ENCODE measurements at regions of chr4 and their contacts with region 1.

Region 1: DNA sequence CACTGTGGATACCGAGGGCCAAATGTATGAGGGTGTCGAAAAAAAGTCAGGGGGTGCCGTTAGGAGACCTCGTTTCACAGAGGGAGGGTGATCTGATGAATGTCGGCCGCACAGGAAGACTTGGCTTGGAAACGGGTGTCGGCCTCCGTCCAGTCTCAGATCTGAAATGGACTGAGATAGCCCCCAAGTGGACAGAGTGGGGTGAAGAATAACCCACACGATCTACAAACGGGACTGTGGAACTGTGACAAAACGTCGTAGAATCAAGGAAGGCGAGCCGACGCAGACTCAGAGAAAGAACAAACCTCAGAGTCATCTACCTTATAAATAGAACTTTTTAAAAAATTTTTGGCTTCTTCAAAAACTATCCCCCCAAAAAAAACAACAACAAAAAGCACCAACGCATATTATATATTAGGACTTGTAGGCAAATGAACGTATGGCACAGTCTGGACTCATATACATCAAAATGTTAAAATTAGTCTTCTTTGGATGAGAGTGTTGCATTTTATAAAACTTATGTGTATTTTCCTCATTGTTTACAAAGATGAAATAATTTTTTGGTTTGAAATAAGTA is 63.8 kb upstream of the IRF2 start:
- DNase-seq: peak; percentile 82 to 90
- ATAC-seq: peak; percentile 94 to 95
- H3K4me3 ChIP-seq: peak overlapping the region; percentile 67 to 89 (median 81)
- H3K27ac ChIP-seq: peak overlapping the region; percentile 90 to 97 (median 92)
- H3K4me1 ChIP-seq: peaks cover 0 to 13% of the 10 kb centered on the region in 2 donors
- H3K27me3 ChIP-seq: no peaks in the 10 kb centered on the region
- CTCF ChIP-seq: peak; percentile 66 to 78 (median 75)
- POLR2A ChIP-seq: no peak

Region 2: GRCh38 chr4:184263910-184264732 is 274.0 kb before region 1 on chr4:
- in situ Hi-C with region 1: loop called in 3 of 4 experiments (anchors 5 to 10 kb)
- intact Hi-C with region 1: loop called (anchors 1 kb)
- DNase-seq: peak; percentile 79 to 86
- ATAC-seq: peak; percentile 85 to 92
- H3K4me3 ChIP-seq: no peak overlapping the region
- H3K27ac ChIP-seq: no peak overlapping the region
- H3K4me1 ChIP-seq: no peaks in the 10 kb centered on the region
- H3K27me3 ChIP-seq: no peaks in the 10 kb centered on the region
- CTCF ChIP-seq: peak; percentile 81 to 94 (median 90)
- POLR2A ChIP-seq: no peak

Region 3: GRCh38 chr4:184287697-184288255 is 250.3 kb before region 1 on chr4:
- in situ Hi-C with region 1: loop called in 2 of 4 experiments (anchors 5 to 10 kb)
- intact Hi-C with region 1: loop called (anchors 1 kb)
- DNase-seq: no peak
- ATAC-seq: peak; percentile 91 to 93
- H3K4me3 ChIP-seq: no peak overlapping the region
- H3K27ac ChIP-seq: peak overlapping the region in 2 of 4 donors; percentile 25
- H3K4me1 ChIP-seq: peaks cover 2 to 8% of the 10 kb centered on the region in 2 donors
- H3K27me3 ChIP-seq: no peaks in the 10 kb centered on the region
- CTCF ChIP-seq: peak; percentile 36 to 46 (median 44)
- POLR2A ChIP-seq: no peak

Region 4: DNA sequence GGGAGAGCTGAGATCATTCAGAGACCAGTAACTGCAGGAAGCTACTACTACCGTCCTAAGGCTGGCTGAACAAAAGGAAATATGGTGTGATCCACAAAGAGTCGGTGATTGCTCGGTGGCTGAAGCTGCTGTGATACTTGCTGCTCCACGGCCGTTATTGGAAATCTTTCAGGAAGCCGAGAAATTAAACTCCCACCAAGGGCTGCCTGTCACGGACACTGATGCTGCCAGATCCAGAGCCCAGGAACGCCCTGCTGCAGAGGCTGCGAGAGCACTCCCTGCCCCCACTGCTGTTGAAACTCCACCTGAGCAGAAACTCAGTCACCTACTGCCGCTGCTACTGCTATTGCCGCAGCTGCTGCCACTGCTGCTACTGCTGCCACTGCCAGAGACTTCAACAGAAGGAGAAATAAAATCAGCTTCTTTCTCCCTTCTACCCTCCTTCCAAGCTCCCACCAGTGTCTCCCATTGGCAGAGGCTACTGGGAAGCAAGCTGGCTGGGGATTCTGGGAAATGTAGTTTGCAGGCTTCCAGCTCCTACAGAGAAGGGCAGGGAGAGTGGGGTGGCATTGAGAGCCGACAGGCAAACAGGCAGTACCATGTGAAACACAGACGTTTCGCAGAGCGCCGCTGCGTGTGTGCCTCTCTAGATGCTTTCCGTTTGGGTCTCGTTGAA is 194.5 kb before region 1 on chr4:
- in situ Hi-C with region 1: no loop called
- intact Hi-C with region 1: loop called (anchors 1 kb)
- DNase-seq: peak; percentile 77 to 84
- ATAC-seq: peak; percentile 64 to 69
- H3K4me3 ChIP-seq: peak overlapping the region; percentile 56 to 82 (median 67)
- H3K27ac ChIP-seq: peak overlapping the region; percentile 91 to 97 (median 92)
- H3K4me1 ChIP-seq: peaks cover 51 to 54% of the 10 kb centered on the region in 2 donors
- H3K27me3 ChIP-seq: no peaks in the 10 kb centered on the region
- CTCF ChIP-seq: no peak
- POLR2A ChIP-seq: peak; percentile 50 to 69

Region 5: DNA sequence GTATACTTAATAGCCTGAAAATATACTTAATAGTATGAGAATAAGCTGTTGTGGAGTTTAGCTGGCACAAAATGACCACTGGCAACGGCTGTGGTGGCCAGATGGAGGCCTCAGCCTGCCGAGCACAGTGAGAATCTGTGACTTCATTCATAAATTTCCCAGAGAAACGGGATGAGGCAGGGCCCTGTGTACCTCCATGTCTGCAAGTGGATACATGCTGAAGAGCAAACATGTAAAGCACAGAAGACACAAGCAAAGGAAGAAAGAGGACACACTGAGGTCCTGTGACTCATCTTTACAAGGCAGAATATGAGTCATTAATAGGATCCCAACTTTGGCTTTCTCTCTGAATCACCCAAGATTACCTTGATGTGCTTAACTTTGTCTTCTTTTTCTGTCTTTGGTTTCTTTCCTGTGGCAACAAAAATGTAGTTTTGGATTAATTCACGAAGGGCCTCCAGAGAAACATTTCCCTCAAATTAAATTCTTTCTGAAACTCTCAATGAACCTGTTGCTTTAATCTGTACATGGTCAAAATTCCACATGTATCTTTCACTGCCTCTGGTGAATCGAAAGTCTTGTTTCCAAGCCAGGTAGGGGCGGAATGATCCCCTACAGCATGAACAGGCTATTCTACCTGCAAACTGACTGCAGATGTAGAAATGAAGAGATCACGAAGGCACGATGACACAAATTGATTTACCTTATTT is 120.2 kb before region 1 on chr4:
- in situ Hi-C with region 1: no loop called
- intact Hi-C with region 1: loop called (anchors 2 kb)
- DNase-seq: no peak
- ATAC-seq: peak; percentile 97 to 98
- H3K4me3 ChIP-seq: peak overlapping the region in 1 of 4 donors; percentile 26
- H3K27ac ChIP-seq: peak overlapping the region; percentile 41 to 81 (median 68)
- H3K4me1 ChIP-seq: peaks cover 23 to 36% of the 10 kb centered on the region in 2 donors
- H3K27me3 ChIP-seq: no peaks in the 10 kb centered on the region
- CTCF ChIP-seq: no peak
- POLR2A ChIP-seq: no peak

Region 6: DNA sequence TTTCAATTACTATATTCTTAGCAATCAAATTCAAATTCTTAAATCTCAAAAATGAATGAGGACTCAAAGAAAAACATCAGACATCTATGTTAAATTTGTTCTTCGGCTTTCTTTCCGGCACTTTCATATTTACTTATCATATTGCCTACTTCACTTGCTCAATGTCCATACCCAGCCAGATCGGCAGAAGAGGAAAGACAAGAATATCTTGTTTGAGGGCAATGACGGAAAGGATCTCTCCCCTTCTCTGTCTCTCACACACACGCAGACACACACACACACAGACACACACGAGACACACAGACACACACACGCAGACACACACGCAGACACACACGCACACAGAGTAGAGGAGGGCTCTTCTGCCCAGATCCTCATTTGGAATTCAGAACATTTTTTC is 50.6 kb before region 1 on chr4:
- in situ Hi-C with region 1: loop called in 2 of 4 experiments (anchors 5 to 10 kb)
- intact Hi-C with region 1: no loop called
- DNase-seq: no peak
- ATAC-seq: no peak
- H3K4me3 ChIP-seq: no peak overlapping the region
- H3K27ac ChIP-seq: no peak overlapping the region
- H3K4me1 ChIP-seq: no peaks in the 10 kb centered on the region
- H3K27me3 ChIP-seq: no peaks in the 10 kb centered on the region
- CTCF ChIP-seq: no peak
- POLR2A ChIP-seq: no peak

Region 7: GRCh38 chr4:185203486-185204237 is 665.6 kb after region 1 on chr4 and contains the start of gene CFAP97:
- in situ Hi-C with region 1: no loop called
- intact Hi-C with region 1: loop called (anchors 2 kb)
- DNase-seq: peak; percentile 70 to 79
- ATAC-seq: peak; percentile 87 to 89
- H3K4me3 ChIP-seq: peak within 1 kb of the TSS; percentile 63 to 87 (median 74)
- H3K27ac ChIP-seq: peak within 1 kb of the TSS; percentile 85 to 99 (median 97)
- H3K4me1 ChIP-seq: peaks cover 10 to 25% of the 10 kb centered on the region in 2 donors
- H3K27me3 ChIP-seq: no peaks in the 10 kb centered on the region
- CTCF ChIP-seq: peak in 2 of 5 experiments; percentile 10 to 13
- POLR2A ChIP-seq: peak; percentile 84 to 87
- total RNA-seq, gene CFAP97: 6.5 to 14.1 (median 10.8) TPM

Measured in gastrocnemius medialis (tissue), 4 donors.